CD8-positive, alpha-beta T cell (primary cell): ENCODE measurements at regions of chr10 and their contacts with region 1.

Region 1: GRCh38 chr10:109984013-109984412 is 23.8 kb upstream of the ADD3 start:
- DNase-seq: no peak
- ATAC-seq: no peak
- H3K4me3 ChIP-seq: no peak overlapping the region
- H3K4me3 Mint-ChIP-seq: no peak overlapping the region
- H3K27ac ChIP-seq: no peak overlapping the region
- H3K27ac Mint-ChIP-seq: no peak overlapping the region
- H3K4me1 ChIP-seq: no peaks in the 10 kb centered on the region
- H3K4me1 Mint-ChIP-seq: peaks cover 5% of the 10 kb centered on the region
- H3K27me3 ChIP-seq: no peaks in the 10 kb centered on the region
- H3K27me3 Mint-ChIP-seq: no peaks in the 10 kb centered on the region
- CTCF ChIP-seq: no peak

Region 2: DNA sequence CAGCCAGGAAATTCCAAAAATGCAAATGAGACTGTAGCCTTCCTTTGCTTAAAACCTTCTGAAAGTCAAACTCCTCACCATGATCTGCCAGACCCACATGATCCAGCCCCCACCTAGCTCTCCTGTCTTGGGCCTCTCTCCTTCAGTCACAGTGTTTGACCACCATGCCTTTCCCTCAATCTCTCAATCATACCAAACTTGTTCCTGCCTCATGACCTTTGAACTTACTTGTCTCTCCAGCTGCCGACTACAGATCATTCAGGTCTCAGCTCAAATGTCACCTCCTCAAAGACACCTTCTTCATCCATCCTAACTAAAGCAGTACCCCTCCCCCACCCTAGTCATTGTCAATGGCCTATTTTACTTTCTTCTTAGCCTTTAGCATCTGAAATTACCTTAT is 14.5 kb after region 1 on chr10:
- CTCF ChIA-PET with region 1: interaction called, 3 read pairs
- POLR2A ChIA-PET with region 1: no interaction called
- intact Hi-C with region 1: loop called in 1 of 2 experiments (anchors 2 kb)
- DNase-seq: no peak
- ATAC-seq: no peak
- H3K4me3 ChIP-seq: no peak overlapping the region
- H3K4me3 Mint-ChIP-seq: no peak overlapping the region
- H3K27ac ChIP-seq: no peak overlapping the region
- H3K27ac Mint-ChIP-seq: no peak overlapping the region
- H3K4me1 ChIP-seq: no peaks in the 10 kb centered on the region
- H3K4me1 Mint-ChIP-seq: peaks cover 6% of the 10 kb centered on the region
- H3K27me3 ChIP-seq: no peaks in the 10 kb centered on the region
- H3K27me3 Mint-ChIP-seq: no peaks in the 10 kb centered on the region
- CTCF ChIP-seq: no peak